ENCODE measurements at regions of chr19 and their contacts with region 1.

Region 1: DNA sequence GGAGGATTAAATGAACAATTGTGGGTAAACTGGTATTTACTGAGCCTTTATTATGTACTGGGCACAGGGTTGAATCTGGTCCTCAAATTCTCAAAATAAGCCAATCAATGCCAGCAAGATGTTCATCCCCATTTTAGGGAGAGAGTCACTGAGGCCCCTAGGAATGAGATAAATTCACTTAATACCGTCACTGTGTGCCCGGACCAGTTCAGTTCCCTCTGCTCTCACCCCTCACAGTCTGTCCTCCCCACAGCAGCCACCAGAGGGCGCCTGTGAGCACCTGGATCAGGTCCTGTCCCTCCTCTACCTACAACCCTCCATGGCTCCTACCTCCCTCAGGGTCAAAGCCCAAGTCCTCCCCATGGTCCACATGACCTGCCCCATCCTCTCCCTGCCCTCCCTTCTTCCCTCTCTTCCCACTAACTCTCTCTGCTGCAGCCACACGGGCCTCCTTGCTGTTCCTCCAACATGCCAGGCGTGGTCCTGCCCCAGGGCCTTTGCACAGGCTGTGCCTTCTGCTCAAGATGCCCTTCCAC is 42.0 kb upstream of the NFIC start:
- DNase-seq: peak; percentile 50 to 66 (median 60)
- H3K4me3 ChIP-seq: no peak overlapping the region
- H3K4me3 Mint-ChIP-seq: no peak overlapping the region
- H3K27ac ChIP-seq: no peak overlapping the region
- H3K27ac Mint-ChIP-seq: peak overlapping the region in 1 of 7 donors; percentile 63
- H3K4me1 ChIP-seq: no peaks in the 10 kb centered on the region
- H3K4me1 Mint-ChIP-seq: peaks cover 0 to 2% (median under 1%) of the 10 kb centered on the region in 4 donors
- H3K27me3 ChIP-seq: no peaks in the 10 kb centered on the region
- H3K27me3 Mint-ChIP-seq: peaks cover 9 to 19% of the 10 kb centered on the region in 2 donors

Region 2: DNA sequence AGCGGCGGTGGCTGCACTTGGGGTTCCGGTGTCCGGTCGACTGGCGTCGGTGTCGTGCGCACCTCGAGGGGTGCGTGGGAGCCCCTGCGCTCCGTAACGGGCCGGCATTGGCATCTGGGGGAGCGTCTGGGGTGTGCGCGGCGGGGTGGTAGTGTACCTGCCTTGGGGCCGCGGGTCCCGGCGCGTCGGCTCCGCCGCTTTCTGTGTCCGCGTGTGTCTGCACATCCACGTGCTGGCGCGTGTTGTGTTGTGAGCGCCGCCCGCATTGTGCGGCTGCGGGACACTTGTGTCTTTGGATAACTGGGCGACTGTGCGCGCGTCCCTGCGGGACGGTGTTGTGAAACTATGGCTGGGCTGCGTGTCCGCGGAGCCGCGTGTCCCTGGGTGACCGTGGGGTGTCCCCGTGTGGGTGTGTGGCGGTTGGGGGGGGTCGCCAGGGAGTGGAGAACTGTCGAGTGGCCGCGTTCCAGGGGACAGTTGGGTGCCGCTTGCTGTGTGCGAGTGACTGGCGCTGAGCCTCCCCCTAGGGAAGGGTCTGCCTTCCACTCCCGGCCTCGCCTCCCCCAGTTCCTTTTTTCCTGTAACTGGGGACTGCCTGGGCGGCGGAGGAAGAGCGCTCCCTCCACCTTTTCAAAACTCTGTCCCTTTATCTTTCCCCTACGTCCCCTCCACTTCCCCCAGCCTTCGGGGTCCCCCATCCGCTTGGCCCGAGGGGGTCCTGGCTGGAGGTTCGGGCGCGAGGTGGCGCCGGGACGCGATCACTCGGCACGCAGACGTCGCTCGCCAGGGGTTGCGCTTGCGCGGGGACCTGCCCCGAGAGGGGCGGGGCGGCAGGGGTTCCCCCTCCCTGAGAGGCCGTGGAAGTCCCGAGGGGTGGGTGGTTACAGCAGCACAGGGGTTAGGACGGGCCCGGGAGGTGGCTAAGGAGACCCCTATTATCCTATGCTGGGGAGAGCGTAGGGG is 36.3 kb after region 1 on chr19:
- CTCF ChIA-PET with region 1: no interaction called
- POLR2A ChIA-PET with region 1: no interaction called
- intact Hi-C with region 1: loop called (anchors 5 kb)
- DNase-seq: peak; percentile 64 to 80 (median 71)
- H3K4me3 ChIP-seq: peak overlapping the region; percentile 36 to 66
- H3K4me3 Mint-ChIP-seq: peak overlapping the region; percentile 88 to 94 (median 92)
- H3K27ac ChIP-seq: peak overlapping the region; percentile 63
- H3K27ac Mint-ChIP-seq: peak overlapping the region; percentile 64 to 96 (median 86)
- H3K4me1 ChIP-seq: peaks cover 32% of the 10 kb centered on the region
- H3K4me1 Mint-ChIP-seq: peaks cover 27 to 64% (median 43%) of the 10 kb centered on the region in 4 donors
- H3K27me3 ChIP-seq: no peaks in the 10 kb centered on the region
- H3K27me3 Mint-ChIP-seq: no peaks in the 10 kb centered on the region

Region 3: DNA sequence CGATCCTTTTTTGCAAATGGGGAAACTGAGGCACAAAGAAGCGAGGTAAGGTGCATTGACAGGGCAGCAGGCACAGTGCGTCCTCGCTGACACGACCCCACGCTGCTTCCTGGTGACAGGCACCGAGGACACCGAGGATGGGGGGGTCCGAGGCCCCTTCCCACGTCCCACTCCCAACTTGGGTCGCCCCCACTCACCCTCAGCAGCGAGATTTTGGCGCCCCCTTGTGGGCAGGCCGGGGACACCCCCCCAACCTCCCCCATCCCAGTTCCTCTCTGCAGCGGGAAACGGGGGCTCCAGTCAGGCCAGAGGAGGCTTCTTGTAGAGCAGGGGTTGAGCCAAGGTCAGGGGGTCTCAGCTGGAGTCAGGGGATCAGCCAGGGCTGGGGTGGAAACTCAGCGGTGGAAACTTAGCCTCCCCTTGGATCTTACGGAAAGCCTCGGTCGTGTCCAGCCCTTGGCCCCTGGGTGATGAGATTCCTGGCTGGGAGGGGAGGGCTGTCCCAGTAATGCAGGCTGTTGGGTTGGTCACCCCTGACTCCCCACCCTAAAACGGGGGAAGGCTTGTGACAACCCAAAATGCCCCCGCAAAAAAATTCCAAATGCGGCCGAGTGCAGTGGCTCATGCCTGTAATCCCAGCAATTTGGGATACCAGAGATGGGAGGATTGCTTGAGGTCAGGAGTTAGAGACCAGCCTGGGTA is 147.7 kb after region 1 on chr19:
- CTCF ChIA-PET with region 1: interaction called, 13 read pairs
- POLR2A ChIA-PET with region 1: no interaction called
- intact Hi-C with region 1: loop called (anchors 1 kb)
- DNase-seq: peak in 2 of 5 donors; percentile 14 to 25
- H3K4me3 ChIP-seq: no peak overlapping the region
- H3K4me3 Mint-ChIP-seq: no peak overlapping the region
- H3K27ac ChIP-seq: no peak overlapping the region
- H3K27ac Mint-ChIP-seq: peak overlapping the region in 1 of 7 donors; percentile 24
- H3K4me1 ChIP-seq: no peaks in the 10 kb centered on the region
- H3K4me1 Mint-ChIP-seq: peaks cover 0 to 3% (median under 1%) of the 10 kb centered on the region in 4 donors
- H3K27me3 ChIP-seq: no peaks in the 10 kb centered on the region
- H3K27me3 Mint-ChIP-seq: peaks cover 0 to 1% of the 10 kb centered on the region in 2 donors

Measured in CD4-positive, alpha-beta memory T cell (primary cell).